ENCODE measurements at regions of chr11 and their contacts with region 1.

Region 1: GRCh38 chr11:95144313-95145235 is 54.9 kb downstream of the ENDOD1 start:
- DNase-seq: no peak
- ATAC-seq: no peak
- H3K4me3 ChIP-seq: no peak overlapping the region
- H3K27ac ChIP-seq: no peak overlapping the region
- H3K4me1 ChIP-seq: peaks cover 24% of the 10 kb centered on the region
- H3K27me3 ChIP-seq: no peaks in the 10 kb centered on the region
- CTCF ChIP-seq: no peak

Region 2: DNA sequence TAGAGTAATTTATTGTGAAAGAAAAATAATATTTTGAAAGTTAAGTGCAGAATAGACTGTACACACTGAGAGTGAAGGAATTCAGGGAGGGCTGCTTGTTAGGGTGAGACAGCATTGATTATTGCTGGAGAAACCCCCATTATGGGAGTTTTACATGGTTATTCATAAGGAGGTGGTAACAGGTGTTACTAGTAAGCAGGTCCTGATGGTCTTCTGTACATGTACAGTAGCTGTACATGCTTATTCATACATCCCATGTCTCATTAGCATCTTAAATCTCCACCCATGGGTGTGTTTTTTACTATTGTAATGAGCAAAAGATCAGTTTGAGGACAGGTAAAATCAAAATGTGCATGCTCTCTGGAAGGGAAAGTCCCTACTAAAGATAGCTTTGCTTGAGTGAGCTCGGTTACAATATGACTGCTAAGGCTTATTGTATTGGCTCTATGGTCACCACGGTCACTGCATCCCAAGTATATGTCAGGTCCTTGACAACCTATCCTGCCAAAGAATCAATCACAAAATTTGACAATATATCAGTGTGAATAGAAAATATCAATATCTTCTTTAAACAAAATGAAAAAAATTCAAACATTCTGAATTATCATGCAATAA is 89.2 kb before region 1 on chr11:
- intact Hi-C with region 1: no loop called
- DNase-seq: no peak
- ATAC-seq: no peak
- H3K4me3 ChIP-seq: no peak overlapping the region
- H3K27ac ChIP-seq: no peak overlapping the region
- H3K4me1 ChIP-seq: no peaks in the 10 kb centered on the region
- H3K27me3 ChIP-seq: no peaks in the 10 kb centered on the region
- CTCF ChIP-seq: no peak

Region 3: DNA sequence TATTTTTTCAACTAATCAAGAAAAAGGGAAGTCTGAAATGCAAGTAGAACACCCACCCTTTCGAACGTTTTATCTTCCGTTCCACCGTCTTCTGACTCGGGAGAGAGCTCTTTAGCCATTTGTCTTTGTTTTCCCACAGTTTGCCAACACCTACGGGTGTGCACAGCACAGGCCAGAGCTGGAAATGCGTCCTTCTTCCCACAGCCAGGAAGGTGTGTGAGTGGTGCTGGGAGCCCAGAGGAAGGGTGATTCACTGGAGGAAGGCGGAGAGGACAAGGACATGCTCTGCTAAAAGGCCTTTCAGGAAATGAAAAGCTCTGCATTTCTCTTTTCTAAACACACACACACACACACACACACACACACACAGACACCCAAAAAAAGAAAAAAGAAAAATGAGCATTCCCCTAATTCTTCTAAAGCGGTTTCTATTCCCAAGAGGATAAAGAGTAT is 36.4 kb before region 1 on chr11:
- intact Hi-C with region 1: loop called in 1 of 2 experiments (anchors 2 kb)
- DNase-seq: peak; percentile 54 to 65
- ATAC-seq: peak; percentile 72 to 88 (median 86)
- H3K4me3 ChIP-seq: peak overlapping the region; percentile 58
- H3K27ac ChIP-seq: peak overlapping the region; percentile 94
- H3K4me1 ChIP-seq: peaks cover 89% of the 10 kb centered on the region
- H3K27me3 ChIP-seq: no peaks in the 10 kb centered on the region
- CTCF ChIP-seq: no peak

Measured in psoas muscle (tissue), 8 donors.